Vagina (tissue), 2 donors: ENCODE measurements at regions of chr5 and their contacts with region 1.

Region 1: DNA sequence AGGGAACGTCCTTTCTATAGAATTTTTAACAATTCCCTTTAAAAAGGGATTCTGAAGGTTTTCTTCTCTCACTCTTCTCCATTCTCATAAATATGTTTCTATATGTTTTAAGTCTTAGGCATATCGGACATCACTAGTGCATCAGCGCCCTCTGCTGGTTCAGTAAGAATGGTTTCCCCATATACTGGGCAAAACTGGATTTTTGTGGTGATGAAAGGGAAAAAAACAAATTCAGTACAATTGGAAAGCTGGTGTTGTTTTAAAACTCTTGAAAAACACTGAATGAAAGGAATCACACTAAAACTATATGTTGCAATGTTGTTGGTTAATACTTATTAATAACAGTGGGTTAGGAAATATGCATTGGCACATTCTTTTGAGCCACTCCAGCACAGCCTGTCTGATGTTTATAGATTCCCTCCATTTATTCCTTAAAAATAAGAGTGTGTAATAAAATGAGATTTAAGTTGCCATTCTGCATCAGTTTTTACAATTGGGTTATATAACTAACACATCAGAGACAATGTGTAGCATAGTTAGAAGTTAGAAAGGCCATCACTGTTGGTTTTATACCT is 15.8 kb downstream of the CWC27 start:
- DNase-seq: no peak
- H3K4me3 ChIP-seq: no peak overlapping the region
- H3K27ac ChIP-seq: no peak overlapping the region
- H3K4me1 ChIP-seq: no peaks in the 10 kb centered on the region
- H3K27me3 ChIP-seq: no peaks in the 10 kb centered on the region
- CTCF ChIP-seq: peak; percentile 61 to 79 (median 63)
- POLR2A ChIP-seq: no peak

Region 2: DNA sequence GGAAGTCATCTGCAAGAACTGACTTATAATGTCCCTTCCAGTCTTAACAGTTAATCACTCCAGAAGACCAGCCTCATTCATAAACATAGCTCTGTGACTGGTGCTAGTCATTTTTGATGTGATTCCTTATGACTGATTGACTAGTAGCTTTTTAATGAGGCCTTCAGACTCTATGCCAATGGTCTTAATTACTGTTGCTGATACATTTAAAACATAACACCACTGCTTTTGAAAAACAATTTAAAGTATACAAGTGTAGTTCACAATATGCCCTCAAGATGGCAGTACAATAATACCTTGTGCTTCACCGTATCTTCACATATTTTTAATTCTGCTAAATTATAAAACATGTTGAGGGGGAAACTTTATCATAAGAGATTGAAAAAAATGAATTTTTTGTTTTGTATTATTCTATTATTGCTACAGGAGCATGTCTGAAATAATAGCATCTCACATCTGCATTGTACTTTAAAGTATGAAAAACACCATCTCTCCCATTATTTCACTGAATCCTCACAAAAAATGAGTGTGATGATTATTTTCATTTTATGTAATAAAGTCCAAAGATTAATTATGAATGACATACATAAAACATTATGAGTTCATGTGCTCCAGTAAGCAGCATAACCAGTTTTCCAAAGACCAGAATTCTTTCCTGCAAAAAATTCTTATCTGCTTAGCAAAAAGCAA is 149.4 kb before region 1 on chr5:
- intact Hi-C with region 1: loop called (anchors 5 kb)
- DNase-seq: no peak
- H3K4me3 ChIP-seq: no peak overlapping the region
- H3K27ac ChIP-seq: no peak overlapping the region
- H3K4me1 ChIP-seq: no peaks in the 10 kb centered on the region
- H3K27me3 ChIP-seq: no peaks in the 10 kb centered on the region
- CTCF ChIP-seq: peak; percentile 44 to 79 (median 68)
- POLR2A ChIP-seq: no peak

Region 3: GRCh38 chr5:64666078-64666477 is 118.5 kb before region 1 on chr5:
- intact Hi-C with region 1: no loop called
- DNase-seq: no peak
- H3K4me3 ChIP-seq: no peak overlapping the region
- H3K27ac ChIP-seq: no peak overlapping the region
- H3K4me1 ChIP-seq: no peaks in the 10 kb centered on the region
- H3K27me3 ChIP-seq: no peaks in the 10 kb centered on the region
- CTCF ChIP-seq: no peak
- POLR2A ChIP-seq: no peak